ENCODE measurements at regions of chr9 and their contacts with region 1.

Region 1: DNA sequence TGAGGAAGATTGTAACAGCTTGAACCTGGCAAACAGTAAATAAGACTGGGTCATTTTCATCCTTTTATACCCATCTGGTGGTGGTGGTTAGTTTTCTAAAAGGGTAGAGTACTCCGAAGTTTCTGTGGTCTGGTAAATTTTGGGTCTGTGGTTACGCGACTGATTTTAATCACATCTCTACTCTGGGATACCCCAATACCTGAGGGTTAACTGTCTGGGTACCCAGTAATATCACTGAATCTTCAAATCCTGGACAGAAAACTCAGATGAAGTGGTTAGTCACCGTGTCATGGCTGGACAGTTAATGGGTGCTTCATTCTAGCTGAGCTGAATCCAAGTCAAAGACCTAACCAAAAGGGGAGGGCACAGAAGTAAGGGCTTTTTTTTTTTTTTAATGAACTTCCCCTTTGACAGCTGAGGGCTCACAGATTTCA is 474.2 kb downstream of the GADD45G start:
- DNase-seq: no peak
- ATAC-seq: no peak
- H3K4me3 ChIP-seq: no peak overlapping the region
- H3K27ac ChIP-seq: no peak overlapping the region
- H3K4me1 ChIP-seq: no peaks in the 10 kb centered on the region
- H3K27me3 ChIP-seq: no peaks in the 10 kb centered on the region
- CTCF ChIP-seq: no peak

Region 2: GRCh38 chr9:90012949-90013348 is 66.1 kb before region 1 on chr9:
- intact Hi-C with region 1: loop called (anchors 10 kb)
- DNase-seq: no peak
- ATAC-seq: peak; percentile 49
- H3K4me3 ChIP-seq: no peak overlapping the region
- H3K27ac ChIP-seq: no peak overlapping the region
- H3K4me1 ChIP-seq: no peaks in the 10 kb centered on the region
- H3K27me3 ChIP-seq: no peaks in the 10 kb centered on the region
- CTCF ChIP-seq: no peak